Activated B cell treated with CpG ODN at 0.5 μM for 24 hours (primary cell): ENCODE measurements at regions of chr11 and their contacts with region 1.

Region 1: GRCh38 chr11:65540297-65541092 is 15.6 kb downstream of the SCYL1 start:
- DNase-seq: peak; percentile 88
- ATAC-seq: peak; percentile 88
- H3K4me3 Mint-ChIP-seq: peak overlapping the region; percentile 88
- H3K27ac Mint-ChIP-seq: peak overlapping the region; percentile 86
- H3K4me1 Mint-ChIP-seq: peaks cover 22% of the 10 kb centered on the region
- H3K27me3 Mint-ChIP-seq: no peaks in the 10 kb centered on the region
- CTCF ChIP-seq: no peak

Region 2: GRCh38 chr11:65524741-65525545 is 15.6 kb before region 1 on chr11 and contains the start of gene SCYL1:
- CTCF ChIA-PET with region 1: interaction called, 12 read pairs
- POLR2A ChIA-PET with region 1: interaction called, 37 read pairs
- intact Hi-C with region 1: loop called (anchors 1 kb)
- DNase-seq: peak; percentile 78
- ATAC-seq: peak; percentile 95
- H3K4me3 Mint-ChIP-seq: peak within 1 kb of the TSS; percentile 81
- H3K27ac Mint-ChIP-seq: peak within 1 kb of the TSS; percentile 66
- H3K4me1 Mint-ChIP-seq: peaks cover 47% of the 10 kb centered on the region
- H3K27me3 Mint-ChIP-seq: no peaks in the 10 kb centered on the region
- CTCF ChIP-seq: no peak
- total RNA-seq, gene SCYL1: 70.0 and 75.7 TPM in 2 replicates

Region 3: DNA sequence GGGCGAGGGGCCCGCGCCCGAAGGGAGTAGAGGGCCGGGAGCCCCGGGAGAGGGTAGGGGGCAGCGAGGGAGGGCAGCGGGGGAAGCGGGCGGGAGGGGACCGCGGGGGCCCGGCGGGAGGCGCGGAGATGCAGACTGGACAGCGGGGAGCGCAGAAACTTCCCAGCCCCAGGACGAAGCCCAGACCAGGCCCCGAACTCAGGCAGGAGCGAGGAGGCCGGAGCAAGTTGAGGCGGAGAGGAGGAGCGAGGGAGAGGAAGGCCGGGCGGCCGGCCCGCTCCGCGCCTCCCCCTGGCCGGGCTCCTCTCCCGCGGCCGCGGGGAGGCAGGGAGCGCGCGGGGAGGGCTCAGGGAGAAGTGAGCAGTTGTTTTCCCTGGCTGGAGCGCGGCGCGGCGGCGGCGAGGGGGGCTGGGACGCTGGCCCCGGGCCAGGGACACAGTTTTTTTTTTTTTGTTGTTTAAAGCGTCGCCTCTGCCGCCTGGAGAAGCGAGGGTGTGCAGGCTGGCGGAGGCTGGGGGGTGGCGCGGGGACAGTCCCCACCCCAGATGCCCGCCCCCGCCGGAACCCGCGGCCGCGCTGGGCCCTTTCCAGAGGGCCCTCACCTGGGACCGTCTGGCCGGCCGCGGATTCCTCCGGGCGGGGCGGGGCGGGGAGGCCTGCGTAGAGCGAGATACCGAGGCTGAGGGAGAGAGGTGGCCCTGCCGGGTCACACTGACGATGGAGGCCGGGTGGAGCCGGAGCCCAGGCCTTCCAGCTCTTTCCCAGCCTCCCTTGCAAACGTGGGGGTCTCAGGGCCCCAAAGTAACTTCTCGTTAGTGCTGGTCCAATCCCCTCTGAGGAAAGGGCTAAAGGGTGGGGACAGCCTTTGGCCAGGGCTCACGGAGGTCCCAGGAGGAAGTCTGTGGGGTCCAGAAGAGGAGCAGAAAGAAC is 17.8 kb after region 1 on chr11 and contains the start of gene LTBP3:
- CTCF ChIA-PET with region 1: interaction called, 47 read pairs
- POLR2A ChIA-PET with region 1: interaction called, 38 read pairs
- intact Hi-C with region 1: loop called (anchors 2 kb)
- DNase-seq: peak; percentile 44
- ATAC-seq: peak; percentile 61
- H3K4me3 Mint-ChIP-seq: peak within 1 kb of the TSS; percentile 79
- H3K27ac Mint-ChIP-seq: peak within 1 kb of the TSS; percentile 72
- H3K4me1 Mint-ChIP-seq: peaks cover 29% of the 10 kb centered on the region
- H3K27me3 Mint-ChIP-seq: peaks cover 4% of the 10 kb centered on the region
- CTCF ChIP-seq: no peak
- total RNA-seq, gene LTBP3: 25.0 and 25.3 TPM in 2 replicates

Region 4: GRCh38 chr11:65593518-65594298 is 53.2 kb after region 1 on chr11:
- CTCF ChIA-PET with region 1: interaction called, 52 read pairs
- POLR2A ChIA-PET with region 1: interaction called, 52 read pairs
- intact Hi-C with region 1: loop called (anchors 1 kb)
- DNase-seq: no peak
- ATAC-seq: peak; percentile 41
- H3K4me3 Mint-ChIP-seq: no peak overlapping the region
- H3K27ac Mint-ChIP-seq: no peak overlapping the region
- H3K4me1 Mint-ChIP-seq: peaks cover 24% of the 10 kb centered on the region
- H3K27me3 Mint-ChIP-seq: no peaks in the 10 kb centered on the region
- CTCF ChIP-seq: peak; percentile 37